Cardiac septum (tissue), 1 donor: ENCODE measurements at regions of chr1 and their contacts with region 1.

Region 1: DNA sequence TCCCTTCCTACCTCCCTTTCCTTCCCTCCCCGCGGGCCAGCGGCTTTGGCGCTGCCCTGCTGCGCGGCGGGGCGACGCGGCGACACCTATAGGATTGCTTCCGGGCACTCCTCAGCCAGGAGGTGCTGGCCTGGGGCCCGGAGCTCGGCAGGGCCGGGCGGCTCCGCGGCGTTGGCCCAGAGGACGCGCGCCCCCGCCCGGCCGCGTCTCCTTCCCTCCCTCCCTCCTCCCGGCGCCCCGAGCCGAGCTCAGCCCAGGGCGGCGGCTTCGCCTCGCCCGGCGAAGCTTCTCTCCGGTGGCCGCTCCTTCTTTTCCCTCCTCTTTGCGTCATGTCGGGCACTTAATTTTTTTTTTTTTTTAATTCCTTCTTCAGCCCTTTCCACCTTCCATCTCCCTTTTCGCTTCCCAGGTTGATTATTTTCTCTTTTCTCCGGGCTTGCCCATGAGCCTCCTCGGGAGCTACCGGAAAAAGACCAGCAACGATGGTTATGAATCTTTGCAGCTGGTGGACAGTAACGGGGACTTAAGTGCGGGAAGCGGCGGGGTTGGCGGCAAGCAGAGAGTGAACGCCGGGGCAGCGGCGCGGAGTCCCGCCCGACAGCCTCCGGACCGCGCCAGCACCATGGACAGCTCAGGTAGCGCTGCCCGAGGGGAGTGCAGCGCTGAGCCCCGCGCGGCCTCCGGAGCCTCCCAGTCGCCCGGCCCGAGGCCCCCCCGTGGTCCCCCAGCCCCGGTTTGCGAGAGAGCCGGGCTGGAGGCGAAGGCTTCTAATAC is at the start of gene DNAJC6:
- DNase-seq: peak; percentile 78
- total RNA-seq, gene DNAJC6: 6.5 TPM

Region 2: DNA sequence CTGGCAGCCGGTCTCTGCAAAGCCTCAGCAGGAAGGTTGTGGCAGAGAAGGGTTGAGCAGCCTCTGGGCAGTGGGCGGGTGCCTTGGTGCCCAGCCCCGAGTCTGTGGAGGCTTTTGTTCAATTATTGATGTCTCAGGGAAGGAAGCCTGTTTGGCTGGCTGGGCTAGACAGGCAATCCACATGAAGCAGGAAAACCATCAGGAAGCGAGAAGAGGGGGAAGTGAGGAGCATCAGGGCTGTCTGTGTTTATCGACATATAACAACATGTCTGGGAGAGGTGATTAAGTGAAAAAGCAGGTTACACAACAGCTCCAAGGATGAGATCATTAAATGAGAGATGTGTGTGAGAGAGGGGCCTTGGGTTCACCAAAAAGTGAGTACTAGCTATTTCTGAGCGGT is 1000.6 kb before region 1 on chr1:
- intact Hi-C with region 1: no loop called
- DNase-seq: no peak

Region 3: DNA sequence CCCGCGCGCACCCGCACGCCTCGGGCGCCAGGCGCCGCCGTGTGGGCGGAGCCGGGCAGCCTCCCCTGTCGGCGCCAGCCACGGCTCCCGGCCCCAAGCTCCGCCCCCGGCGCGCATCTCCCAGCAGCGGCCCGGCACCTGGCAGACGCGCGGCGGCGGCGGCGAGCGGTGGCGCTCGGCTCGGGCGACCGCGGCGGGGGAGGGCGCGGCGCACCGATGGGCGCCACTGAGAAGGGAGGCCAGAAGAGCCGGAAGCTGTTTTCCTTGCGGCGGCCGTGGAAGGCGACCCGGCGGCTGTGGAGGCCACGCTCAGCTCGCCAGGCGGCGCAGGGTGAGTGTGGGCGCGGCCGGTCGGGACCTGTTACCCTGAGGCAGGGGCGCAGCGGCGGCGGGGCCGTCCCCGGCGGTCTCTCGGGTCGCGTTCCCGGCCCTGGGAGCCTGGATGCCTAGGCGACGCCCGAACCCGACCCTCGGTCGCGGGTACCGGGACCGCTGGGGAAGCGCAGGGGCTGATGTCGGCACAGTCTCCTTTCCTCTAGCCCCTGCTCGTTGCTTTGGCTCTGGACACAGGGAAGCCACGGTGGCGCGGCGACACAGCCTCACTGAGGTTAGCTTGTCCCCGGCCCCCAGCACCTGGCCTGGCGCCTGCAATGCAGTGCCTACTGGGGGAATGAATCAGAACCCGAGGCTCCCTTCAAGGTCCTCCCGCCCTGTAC is 55.0 kb before region 1 on chr1:
- intact Hi-C with region 1: loop called (anchors 2 kb)
- DNase-seq: peak; percentile 92

Region 4: GRCh38 chr1:65265651-65266351 is 43.7 kb before region 1 on chr1:
- intact Hi-C with region 1: loop called (anchors 5 kb)
- DNase-seq: no peak